SK-N-SH (cell line): ENCODE measurements at regions of chr20 and their contacts with region 1.

Region 1: GRCh38 chr20:47379433-47380150 is 23.1 kb upstream of the ZMYND8 start:
- DNase-seq: no peak
- H3K4me3 ChIP-seq: no peak overlapping the region
- H3K27ac ChIP-seq: peak overlapping the region in 1 of 2 experiments; percentile 69; a peak in 2 of 4 replicates
- H3K4me1 ChIP-seq: peaks cover 3 to 15% of the 10 kb centered on the region in 2 experiments; a peak in 3 of 4 replicates
- H3K27me3 ChIP-seq: no peaks in the 10 kb centered on the region
- CTCF ChIP-seq: no peak
- EP300 ChIP-seq: peak in 1 of 2 experiments; percentile 88; a peak in 2 of 4 replicates
- RAD21 ChIP-seq: no peak

Region 2: GRCh38 chr20:46757754-46758678 is 621.6 kb before region 1 on chr20:
- CTCF ChIA-PET with region 1: interaction called, 22 read pairs
- POLR2A ChIA-PET with region 1: no interaction called
- DNase-seq: peak; percentile 76
- H3K4me3 ChIP-seq: peak overlapping the region in 1 of 2 experiments; percentile 14; a peak in 1 of 4 replicates
- H3K27ac ChIP-seq: no peak overlapping the region
- H3K4me1 ChIP-seq: no peaks in the 10 kb centered on the region
- H3K27me3 ChIP-seq: no peaks in the 10 kb centered on the region
- CTCF ChIP-seq: peak; percentile 98
- EP300 ChIP-seq: no peak
- RAD21 ChIP-seq: peak; percentile 82

Region 3: GRCh38 chr20:47220161-47220582 is 159.4 kb before region 1 on chr20:
- CTCF ChIA-PET with region 1: interaction called, 54 read pairs
- POLR2A ChIA-PET with region 1: no interaction called
- DNase-seq: peak; percentile 61
- H3K4me3 ChIP-seq: no peak overlapping the region; a peak in 1 of 4 replicates
- H3K27ac ChIP-seq: no peak overlapping the region
- H3K4me1 ChIP-seq: no peaks in the 10 kb centered on the region
- H3K27me3 ChIP-seq: no peaks in the 10 kb centered on the region
- CTCF ChIP-seq: peak; percentile 74
- EP300 ChIP-seq: no peak
- RAD21 ChIP-seq: peak; percentile 46

Region 4: DNA sequence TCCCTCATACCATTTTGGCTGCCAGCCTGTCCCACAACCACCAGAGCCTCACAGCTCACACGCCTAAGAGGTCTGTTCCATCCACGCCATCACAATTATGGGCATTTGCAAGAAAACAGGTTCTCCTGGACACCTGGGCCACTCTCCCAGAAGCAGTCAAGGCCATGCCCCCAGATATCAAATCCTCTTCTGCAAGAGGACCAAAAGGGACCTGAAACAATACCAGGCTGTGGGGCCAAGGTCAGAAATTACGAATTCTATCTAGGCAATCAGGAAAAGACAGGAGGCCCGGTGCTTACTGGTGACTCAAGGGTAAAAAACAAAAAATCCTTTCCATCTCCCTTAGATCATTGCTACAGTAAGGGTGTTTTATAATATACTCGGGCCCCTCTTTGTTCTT is 92.9 kb before region 1 on chr20:
- CTCF ChIA-PET with region 1: interaction called, 546 read pairs
- POLR2A ChIA-PET with region 1: no interaction called
- DNase-seq: no peak
- H3K4me3 ChIP-seq: no peak overlapping the region
- H3K27ac ChIP-seq: no peak overlapping the region
- H3K4me1 ChIP-seq: peaks cover 0 to 10% of the 10 kb centered on the region in 2 experiments; a peak in 2 of 4 replicates
- H3K27me3 ChIP-seq: no peaks in the 10 kb centered on the region
- CTCF ChIP-seq: no peak
- EP300 ChIP-seq: no peak
- RAD21 ChIP-seq: no peak

Region 5: DNA sequence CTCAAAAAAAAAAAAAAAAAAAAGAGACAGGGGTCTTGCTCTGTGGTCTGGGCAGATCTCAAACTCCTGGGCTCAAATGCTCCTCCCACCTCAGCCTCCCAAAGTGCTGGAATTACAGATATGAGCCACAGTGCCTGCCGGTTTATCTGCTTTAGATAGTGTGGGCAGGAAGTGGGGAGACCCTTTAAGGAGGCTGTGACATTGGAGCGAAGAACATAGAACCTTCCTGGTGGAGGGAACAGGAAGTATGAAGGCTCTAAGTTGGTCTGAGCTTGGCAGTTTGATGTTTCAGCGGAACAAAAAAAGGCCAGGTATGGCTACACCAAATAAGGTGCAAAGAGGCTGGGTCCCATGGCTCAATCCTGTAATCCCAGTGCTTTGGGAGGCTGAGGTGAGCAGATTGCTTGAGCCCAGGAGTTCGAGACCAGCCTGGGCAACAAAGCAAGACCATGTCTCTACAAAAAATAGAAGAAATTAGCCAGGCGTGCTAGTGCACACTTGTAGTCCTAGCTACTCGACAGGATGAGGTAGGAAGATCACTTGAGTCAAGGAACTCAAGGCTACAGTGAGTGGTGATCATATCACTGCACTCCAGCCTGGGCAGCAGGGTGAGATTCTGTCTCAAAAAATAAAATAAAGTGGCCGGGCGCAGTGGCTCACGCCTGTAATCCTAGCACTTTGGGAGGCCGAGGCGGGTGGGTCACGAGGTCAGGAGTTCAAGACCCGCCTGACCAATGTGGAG is 14.4 kb before region 1 on chr20:
- CTCF ChIA-PET with region 1: interaction called, 65 read pairs
- POLR2A ChIA-PET with region 1: no interaction called
- DNase-seq: no peak
- H3K4me3 ChIP-seq: no peak overlapping the region
- H3K27ac ChIP-seq: no peak overlapping the region
- H3K4me1 ChIP-seq: peaks cover 13 to 14% of the 10 kb centered on the region in 2 experiments
- H3K27me3 ChIP-seq: no peaks in the 10 kb centered on the region
- CTCF ChIP-seq: no peak
- EP300 ChIP-seq: no peak
- RAD21 ChIP-seq: no peak

Region 6: DNA sequence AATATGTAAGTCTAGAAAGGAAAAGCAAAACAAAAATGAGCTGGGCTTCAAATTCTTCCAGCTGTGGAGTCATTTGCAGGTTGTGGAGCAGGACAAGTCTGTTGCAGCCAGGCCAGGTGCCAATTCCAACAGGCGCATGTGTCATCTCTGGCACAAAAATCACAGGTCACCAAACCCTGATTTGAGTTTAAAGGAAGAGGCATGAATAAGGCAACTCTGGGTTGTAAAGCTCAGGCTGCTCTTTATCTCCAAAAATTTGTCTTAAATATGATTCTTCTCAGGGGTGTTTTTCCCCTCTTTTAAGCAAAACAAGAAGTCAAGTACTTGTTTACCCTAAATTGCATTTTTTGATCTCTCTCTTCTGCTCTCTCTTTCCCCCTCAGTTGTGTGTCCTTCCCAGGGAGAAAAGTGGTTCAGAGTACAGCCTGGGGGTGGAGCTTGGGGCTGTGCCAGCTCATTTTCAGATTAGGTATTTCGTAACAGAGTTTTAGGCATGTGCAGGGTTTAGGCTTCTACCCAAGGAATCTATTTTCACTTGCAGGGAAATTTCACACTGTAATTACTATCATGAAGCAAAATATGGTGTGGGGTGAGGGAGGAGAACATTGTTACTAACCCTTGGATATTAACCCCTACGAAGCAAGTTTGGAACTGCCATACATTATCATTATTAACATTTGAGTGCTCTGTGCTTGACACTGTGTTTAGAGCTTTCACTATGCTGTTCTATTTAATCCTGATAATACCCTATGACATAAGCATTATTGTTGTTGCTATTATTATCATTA is 113.8 kb after region 1 on chr20:
- CTCF ChIA-PET with region 1: interaction called, 11 read pairs
- POLR2A ChIA-PET with region 1: no interaction called
- DNase-seq: peak; percentile 52
- H3K4me3 ChIP-seq: no peak overlapping the region
- H3K27ac ChIP-seq: peak overlapping the region in 1 of 2 experiments; percentile 43; a peak in 2 of 4 replicates
- H3K4me1 ChIP-seq: peaks cover 8 to 11% of the 10 kb centered on the region in 2 experiments; a peak in 3 of 4 replicates
- H3K27me3 ChIP-seq: no peaks in the 10 kb centered on the region
- CTCF ChIP-seq: no peak
- EP300 ChIP-seq: no peak
- RAD21 ChIP-seq: no peak